ENCODE measurements at regions of chr10 and their contacts with region 1.

Region 1: DNA sequence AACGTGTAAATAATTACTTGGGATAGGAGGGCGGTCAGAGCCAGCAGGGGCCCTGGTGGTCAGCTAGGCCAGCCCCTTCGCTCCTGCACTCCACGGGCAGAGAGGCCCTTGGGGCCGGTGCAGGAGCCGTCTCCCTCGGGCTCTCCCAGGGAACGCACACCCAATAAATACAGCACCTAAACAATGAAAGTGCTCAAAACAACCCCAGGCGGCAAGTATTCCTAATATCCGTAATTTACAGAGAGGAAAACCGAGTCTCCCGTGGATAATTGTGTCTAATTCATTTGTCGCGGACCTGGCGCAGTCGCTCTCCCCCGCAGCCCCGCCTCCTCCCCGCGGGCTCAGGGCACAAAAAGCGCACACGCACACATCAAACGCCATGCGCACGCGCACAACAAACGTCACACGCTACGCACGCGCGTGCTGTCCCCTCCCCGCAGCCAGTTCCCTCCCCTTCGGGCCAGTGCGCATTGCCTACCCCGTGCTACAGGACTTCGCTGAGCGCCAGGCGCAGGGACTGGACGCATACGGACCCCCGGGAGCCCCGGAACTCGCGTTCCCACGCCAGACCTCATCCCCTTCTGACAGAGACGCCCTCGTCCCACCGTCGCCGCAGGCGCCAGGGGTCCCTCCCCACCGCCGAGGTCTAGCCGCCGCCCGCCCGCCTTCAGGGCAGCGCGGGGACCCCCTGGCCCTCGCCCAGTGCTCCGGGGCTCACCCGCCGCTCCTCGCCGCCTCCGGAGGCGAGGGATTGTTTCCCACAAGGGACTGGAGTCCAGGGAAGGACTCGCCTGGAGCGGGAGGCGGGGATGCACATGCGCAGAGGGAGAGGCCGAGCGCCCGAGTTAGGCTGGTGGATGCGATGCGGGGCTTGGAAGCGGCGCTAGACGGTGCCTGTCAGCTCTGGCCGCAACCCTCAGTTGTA is at the start of gene ZNF248:
- DNase-seq: peak; percentile 96
- H3K4me3 ChIP-seq: peak within 1 kb of the TSS; percentile 83 to 96
- H3K27ac ChIP-seq: peak within 1 kb of the TSS; percentile 100
- H3K4me1 ChIP-seq: no peaks in the 10 kb centered on the region
- H3K27me3 ChIP-seq: no peaks in the 10 kb centered on the region
- CTCF ChIP-seq: peak in 1 of 4 experiments; percentile 15
- POLR2A ChIP-seq: peak; percentile 97
- total RNA-seq, gene ZNF248: 12.3 to 18.2 TPM

Region 2: DNA sequence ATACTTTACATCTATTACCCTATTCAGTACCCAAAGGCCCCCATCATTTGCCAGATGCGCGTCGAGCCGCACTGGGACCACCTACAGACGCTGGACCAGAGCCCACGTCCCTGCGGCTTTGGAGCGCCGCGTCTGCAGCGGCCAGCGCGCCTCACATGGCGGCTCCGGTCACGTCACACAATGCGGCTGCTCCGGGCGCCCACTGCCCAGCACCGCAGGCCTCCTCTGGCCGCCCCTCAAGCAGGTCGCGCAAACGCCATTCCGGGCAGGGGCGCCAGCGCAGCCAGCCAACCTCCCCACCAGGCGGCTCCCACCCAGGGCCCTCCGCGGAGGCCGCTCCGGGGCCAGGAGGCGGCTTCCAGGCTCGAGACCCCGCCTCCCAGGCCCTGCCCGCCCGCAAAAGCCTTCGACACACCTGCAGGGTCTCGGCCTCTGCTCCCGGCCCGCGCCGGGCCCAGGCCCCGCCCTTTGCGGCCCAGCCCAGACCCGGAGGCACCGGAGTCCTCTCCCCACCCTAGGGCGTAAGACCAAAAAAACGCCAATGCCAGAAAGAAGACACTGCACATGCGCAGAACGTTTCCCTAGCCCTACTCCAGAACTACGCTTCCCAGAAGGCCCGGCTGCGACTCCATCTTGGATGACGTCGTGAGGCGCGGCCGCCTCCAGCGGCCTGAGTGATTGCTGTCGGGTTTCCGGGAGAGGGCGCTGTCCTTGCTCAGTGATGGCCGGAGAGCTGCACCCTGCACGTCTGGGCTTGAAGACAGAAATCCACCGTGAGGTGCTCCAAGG is 118.7 kb after region 1 on chr10 and contains the start of gene ZNF25:
- intact Hi-C with region 1: loop called (anchors 2 kb)
- DNase-seq: peak; percentile 99
- H3K4me3 ChIP-seq: peak within 1 kb of the TSS; percentile 78 to 96
- H3K27ac ChIP-seq: peak within 1 kb of the TSS; percentile 96 to 99
- H3K4me1 ChIP-seq: no peaks in the 10 kb centered on the region
- H3K27me3 ChIP-seq: no peaks in the 10 kb centered on the region
- CTCF ChIP-seq: peak; percentile 82 to 98 (median 96)
- POLR2A ChIP-seq: peak; percentile 69
- total RNA-seq, gene ZNF25: 9.8 to 13.0 TPM

Region 3: GRCh38 chr10:38010119-38010903 is 152.8 kb after region 1 on chr10 and contains the start of gene ZNF33A:
- intact Hi-C with region 1: loop called (anchors 1 kb)
- DNase-seq: peak; percentile 95
- H3K4me3 ChIP-seq: peak within 1 kb of the TSS; percentile 90
- H3K27ac ChIP-seq: peak within 1 kb of the TSS; percentile 99 to 100
- H3K4me1 ChIP-seq: no peaks in the 10 kb centered on the region
- H3K27me3 ChIP-seq: no peaks in the 10 kb centered on the region
- CTCF ChIP-seq: peak in 1 of 4 experiments; percentile 13
- POLR2A ChIP-seq: peak; percentile 52
- total RNA-seq, gene ZNF33A: 24.9 to 39.2 TPM

Region 4: DNA sequence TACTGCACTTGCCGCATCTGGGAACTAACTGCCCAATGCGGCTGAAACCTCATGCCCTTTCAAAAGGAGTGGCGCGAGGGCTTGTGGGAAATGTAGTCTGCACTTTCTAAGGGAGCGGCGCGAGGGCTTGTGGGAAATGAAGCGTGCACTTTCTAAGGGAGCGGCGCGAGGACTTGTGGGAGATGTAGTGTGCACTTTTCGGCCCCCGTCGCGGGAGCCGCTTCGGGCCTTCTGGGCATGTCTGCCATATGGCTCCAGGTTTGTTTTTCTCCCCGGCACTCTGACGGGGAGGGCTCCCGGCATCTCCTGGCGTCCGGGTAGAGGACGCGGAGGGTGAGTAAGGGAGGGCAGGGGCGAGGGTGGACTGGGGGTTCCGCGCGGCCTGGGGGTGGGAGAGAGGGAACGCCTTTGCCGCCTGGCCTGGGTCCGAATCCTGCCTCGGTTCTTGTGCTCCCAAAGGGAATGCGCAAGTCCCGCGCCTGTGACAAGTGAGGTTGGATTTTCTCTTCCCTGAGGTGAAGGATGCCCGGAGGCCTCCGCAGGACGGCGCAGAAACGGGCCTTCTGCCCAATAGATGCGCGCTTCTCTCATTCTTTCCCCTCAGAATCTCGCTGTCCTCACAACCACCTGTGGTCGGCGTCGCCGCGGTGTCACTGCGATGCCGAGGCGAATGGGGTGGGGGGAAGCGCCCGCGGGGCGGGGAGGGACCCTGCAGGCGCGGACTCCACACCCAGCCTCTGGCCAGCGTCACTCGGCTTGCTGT is 236.8 kb after region 1 on chr10 and contains the start of gene ZNF37A:
- intact Hi-C with region 1: loop called (anchors 10 kb)
- DNase-seq: peak; percentile 97
- H3K4me3 ChIP-seq: peak within 1 kb of the TSS; percentile 65 to 73
- H3K27ac ChIP-seq: peak within 1 kb of the TSS; percentile 84 to 86
- H3K4me1 ChIP-seq: no peaks in the 10 kb centered on the region
- H3K27me3 ChIP-seq: no peaks in the 10 kb centered on the region
- CTCF ChIP-seq: peak in 1 of 4 experiments; percentile 23
- POLR2A ChIP-seq: peak; percentile 70
- total RNA-seq, gene ZNF37A: 11.7 to 29.5 TPM